ENCODE measurements at regions of chr1 and their contacts with region 1.

Region 1: DNA sequence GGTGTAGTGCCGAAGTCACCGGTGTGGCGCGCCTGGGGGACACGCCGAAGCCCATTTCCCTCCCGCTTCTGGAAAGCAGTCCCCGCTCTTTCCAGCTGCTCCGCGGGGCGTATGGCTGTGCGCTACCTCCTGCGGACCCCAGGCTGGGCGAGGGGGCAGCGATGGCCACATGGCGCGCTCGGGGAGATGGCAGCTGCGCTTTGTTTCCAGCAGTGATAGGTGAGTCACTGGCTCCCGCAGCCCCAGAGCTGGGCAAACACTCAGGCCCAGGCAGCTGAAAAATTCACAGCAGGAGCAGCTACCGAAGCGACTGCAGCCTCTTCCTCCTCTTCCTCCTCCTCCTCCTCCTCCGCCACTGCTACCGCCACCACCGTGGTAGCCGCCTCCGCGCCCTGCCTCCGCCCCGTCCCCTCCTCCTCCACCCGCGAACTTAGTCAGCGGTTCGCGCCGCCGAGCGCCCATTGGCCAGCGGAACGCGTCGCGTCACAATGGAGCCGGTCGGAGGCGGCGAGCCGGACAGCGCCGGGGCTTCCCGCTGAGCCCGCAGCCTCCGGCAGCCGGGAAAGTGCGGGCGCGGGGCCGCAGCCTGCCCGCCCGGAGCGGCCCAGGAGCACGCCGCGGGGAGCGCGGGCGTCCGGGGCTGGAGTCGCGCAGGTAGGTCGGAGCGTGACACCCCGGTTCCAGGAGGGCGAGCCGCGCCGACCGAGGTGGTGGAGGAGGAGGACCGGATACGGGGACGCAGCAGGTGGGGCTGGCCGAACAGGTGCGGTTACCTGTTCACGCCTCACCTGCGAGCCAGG is at the start of gene LRRC8B:
- DNase-seq: peak; percentile 93
- H3K4me3 Mint-ChIP-seq: no peak within 1 kb of the TSS
- H3K27ac Mint-ChIP-seq: peak within 1 kb of the TSS; percentile 89
- H3K4me1 Mint-ChIP-seq: peaks cover 15% of the 10 kb centered on the region
- H3K27me3 Mint-ChIP-seq: no peaks in the 10 kb centered on the region
- CTCF ChIP-seq: no peak
- total RNA-seq, gene LRRC8B: 42.5 and 42.9 TPM in 2 replicates

Region 2: DNA sequence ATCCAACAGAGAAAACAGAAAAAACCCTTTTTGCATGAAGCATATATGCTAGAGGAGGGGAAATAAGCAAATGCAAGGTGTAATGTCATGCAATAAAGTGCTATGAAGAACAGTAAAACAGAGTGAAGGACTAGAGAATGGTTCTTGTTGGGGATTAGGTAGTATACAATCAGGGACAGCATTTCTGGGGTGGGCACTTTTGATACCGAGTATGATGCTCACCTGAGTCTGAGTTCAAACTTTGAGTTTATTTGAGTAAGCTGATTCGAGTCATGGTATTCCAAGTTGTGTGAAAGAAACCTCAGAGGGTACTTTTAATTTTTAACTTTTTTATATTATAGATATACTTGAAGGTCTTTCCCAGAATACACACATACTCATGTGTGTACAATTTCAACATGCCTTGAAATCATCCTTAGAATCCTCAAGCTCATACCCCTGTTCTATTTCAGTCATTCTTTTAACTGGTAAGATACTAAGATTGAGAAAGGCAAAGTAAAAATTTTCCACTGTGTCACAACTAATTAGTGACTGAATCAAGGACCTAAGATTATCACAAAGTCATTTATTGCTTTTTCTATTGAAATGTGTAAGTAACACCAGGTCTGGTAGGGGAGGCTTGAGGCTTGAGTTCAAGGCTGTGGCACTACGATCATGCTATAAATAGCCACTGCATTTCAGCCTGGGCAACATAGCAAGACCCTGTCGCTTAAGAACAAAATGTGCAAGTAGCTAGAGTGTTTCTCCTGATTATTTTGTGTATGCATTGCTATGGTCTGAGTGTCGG is 12.2 kb after region 1 on chr1:
- CTCF ChIA-PET with region 1: no interaction called
- intact Hi-C with region 1: loop called (anchors 1 kb)
- DNase-seq: no peak
- H3K4me3 Mint-ChIP-seq: no peak overlapping the region
- H3K27ac Mint-ChIP-seq: no peak overlapping the region
- H3K4me1 Mint-ChIP-seq: peaks cover 9% of the 10 kb centered on the region
- H3K27me3 Mint-ChIP-seq: no peaks in the 10 kb centered on the region
- CTCF ChIP-seq: no peak

Region 3: GRCh38 chr1:89552471-89553081 is 28.0 kb after region 1 on chr1:
- CTCF ChIA-PET with region 1: no interaction called
- intact Hi-C with region 1: loop called (anchors 5 kb)
- DNase-seq: peak; percentile 40
- H3K4me3 Mint-ChIP-seq: peak overlapping the region; percentile 39
- H3K27ac Mint-ChIP-seq: peak overlapping the region; percentile 62
- H3K4me1 Mint-ChIP-seq: peaks cover 53% of the 10 kb centered on the region
- H3K27me3 Mint-ChIP-seq: no peaks in the 10 kb centered on the region
- CTCF ChIP-seq: no peak

Region 4: DNA sequence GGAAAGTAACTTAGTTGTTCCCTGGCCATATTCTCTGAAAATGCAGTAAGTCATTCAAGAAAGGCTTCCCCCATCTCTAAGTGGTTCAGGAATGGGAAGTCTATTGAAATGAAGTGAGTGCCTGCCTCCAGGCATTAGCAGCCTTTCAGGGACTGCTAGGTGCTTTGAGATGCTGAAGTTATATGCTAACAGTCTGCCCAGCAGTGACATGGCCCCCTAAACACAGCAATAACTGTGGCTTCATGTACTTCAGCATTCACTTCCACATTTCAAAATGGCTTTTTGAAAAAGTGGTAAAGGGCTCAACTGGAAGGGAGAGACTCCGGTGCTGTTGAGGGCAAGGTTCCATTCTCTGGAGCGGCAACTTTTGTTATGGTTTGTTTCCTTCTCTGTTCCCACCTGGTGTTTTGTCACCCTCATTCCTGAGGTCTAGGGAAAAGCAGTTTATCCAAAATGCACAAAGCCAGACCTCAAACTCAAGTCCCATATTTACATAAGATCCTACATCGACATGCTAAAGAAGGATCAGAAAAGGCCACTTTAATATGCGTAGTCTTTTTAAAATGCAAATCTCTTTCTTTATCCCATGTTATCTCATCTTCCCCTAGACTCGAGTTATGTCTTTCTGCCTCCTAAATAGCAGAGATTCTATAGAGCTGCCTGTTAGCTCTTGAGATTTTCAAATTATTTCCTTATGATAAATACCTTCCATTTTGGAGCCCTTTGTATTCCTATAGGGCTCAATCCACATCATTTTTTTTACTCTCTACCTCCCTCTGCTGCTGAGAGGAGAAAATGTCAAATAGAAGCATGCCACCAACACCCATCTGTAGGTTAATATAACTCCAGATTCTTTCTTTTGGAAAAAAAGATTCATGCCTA is 74.1 kb after region 1 on chr1:
- CTCF ChIA-PET with region 1: no interaction called
- intact Hi-C with region 1: loop called (anchors 1 kb)
- DNase-seq: peak; percentile 36
- H3K4me3 Mint-ChIP-seq: no peak overlapping the region
- H3K27ac Mint-ChIP-seq: peak overlapping the region; percentile 56
- H3K4me1 Mint-ChIP-seq: peaks cover 14% of the 10 kb centered on the region
- H3K27me3 Mint-ChIP-seq: no peaks in the 10 kb centered on the region
- CTCF ChIP-seq: peak; percentile 60

Region 5: GRCh38 chr1:89609781-89610456 is 85.3 kb after region 1 on chr1:
- CTCF ChIA-PET with region 1: no interaction called
- intact Hi-C with region 1: no loop called
- DNase-seq: no peak
- H3K4me3 Mint-ChIP-seq: no peak overlapping the region
- H3K27ac Mint-ChIP-seq: no peak overlapping the region
- H3K4me1 Mint-ChIP-seq: peaks cover 15% of the 10 kb centered on the region
- H3K27me3 Mint-ChIP-seq: peaks cover 11% of the 10 kb centered on the region
- CTCF ChIP-seq: no peak